ENCODE measurements at regions of chr16 and their contacts with region 1.

Region 1: GRCh38 chr16:89201439-89202377 is 1.4 kb upstream of the SLC22A31 start:
- DNase-seq: no peak
- H3K4me3 ChIP-seq: peak overlapping the region; percentile 45 to 54
- H3K27ac ChIP-seq: no peak overlapping the region
- H3K4me1 ChIP-seq: peaks cover 2 to 3% of the 10 kb centered on the region in 2 donors
- H3K27me3 ChIP-seq: peaks cover 11% of the 10 kb centered on the region
- CTCF ChIP-seq: no peak

Region 2: DNA sequence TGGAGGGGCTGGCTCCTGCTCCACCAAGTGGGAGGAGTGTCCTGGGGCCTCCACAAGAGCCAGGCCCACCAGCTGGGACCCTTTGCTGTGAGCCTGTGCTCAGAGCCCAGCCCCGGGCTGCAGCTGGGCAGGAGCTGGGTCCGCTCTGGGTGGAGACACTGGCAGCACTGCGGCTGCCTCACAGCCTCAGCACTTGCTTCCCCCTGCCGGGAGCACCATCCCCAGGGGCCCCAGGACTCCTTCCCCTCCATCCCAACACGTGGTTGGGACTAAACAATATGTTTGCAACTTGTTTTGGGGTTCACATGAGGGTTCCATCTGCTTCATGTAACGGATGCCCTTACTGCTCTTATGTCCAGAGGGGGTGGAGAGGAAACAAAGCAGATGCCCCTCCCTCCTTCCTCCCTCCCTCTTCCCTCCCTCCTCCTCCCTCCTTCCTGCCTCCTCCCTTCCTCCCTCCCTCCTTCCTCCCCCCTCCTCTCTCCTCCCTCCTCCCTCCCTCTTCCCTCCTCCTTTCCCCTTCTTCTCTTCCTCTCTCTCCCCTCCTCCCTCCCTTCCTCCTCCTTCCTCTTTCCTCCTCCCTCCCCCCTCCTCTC is 208.4 kb before region 1 on chr16:
- intact Hi-C with region 1: no loop called
- DNase-seq: no peak
- H3K4me3 ChIP-seq: no peak overlapping the region
- H3K27ac ChIP-seq: no peak overlapping the region
- H3K4me1 ChIP-seq: no peaks in the 10 kb centered on the region
- H3K27me3 ChIP-seq: peaks cover 3% of the 10 kb centered on the region
- CTCF ChIP-seq: no peak

Region 3: DNA sequence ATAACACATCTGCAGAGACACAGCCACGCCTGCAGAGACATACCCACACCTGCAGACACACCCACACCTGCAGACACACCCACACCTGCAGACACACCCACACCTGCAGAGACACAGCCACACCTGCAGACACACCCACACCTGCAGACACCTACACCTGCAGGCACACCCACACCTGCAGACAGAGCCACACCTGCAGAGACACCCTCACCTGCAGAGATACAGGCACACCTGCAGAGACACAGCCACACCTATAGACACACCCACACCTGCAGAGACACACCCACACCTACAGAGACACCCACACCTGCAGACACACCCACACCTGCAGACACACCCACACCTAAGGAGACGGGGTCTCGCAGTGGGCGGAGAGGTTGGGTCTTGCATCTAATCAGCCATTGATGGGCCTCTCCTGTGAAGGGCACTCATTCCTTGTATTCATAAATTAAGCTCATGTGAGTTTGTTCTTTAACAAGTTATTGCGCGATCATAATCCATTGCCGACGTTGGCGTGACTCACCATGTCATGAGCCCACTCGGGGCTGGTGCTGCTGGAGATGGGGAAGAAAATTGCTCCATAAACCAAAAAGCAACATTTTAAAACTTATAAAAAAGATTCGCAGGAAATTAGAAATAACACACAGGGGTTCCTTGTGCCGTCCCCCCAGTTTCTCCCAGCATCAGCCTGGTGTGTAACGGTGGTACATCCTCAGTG is 59.1 kb before region 1 on chr16:
- intact Hi-C with region 1: loop called (anchors 10 kb)
- DNase-seq: no peak
- H3K4me3 ChIP-seq: no peak overlapping the region
- H3K27ac ChIP-seq: no peak overlapping the region
- H3K4me1 ChIP-seq: no peaks in the 10 kb centered on the region
- H3K27me3 ChIP-seq: no peaks in the 10 kb centered on the region
- CTCF ChIP-seq: no peak

Region 4: DNA sequence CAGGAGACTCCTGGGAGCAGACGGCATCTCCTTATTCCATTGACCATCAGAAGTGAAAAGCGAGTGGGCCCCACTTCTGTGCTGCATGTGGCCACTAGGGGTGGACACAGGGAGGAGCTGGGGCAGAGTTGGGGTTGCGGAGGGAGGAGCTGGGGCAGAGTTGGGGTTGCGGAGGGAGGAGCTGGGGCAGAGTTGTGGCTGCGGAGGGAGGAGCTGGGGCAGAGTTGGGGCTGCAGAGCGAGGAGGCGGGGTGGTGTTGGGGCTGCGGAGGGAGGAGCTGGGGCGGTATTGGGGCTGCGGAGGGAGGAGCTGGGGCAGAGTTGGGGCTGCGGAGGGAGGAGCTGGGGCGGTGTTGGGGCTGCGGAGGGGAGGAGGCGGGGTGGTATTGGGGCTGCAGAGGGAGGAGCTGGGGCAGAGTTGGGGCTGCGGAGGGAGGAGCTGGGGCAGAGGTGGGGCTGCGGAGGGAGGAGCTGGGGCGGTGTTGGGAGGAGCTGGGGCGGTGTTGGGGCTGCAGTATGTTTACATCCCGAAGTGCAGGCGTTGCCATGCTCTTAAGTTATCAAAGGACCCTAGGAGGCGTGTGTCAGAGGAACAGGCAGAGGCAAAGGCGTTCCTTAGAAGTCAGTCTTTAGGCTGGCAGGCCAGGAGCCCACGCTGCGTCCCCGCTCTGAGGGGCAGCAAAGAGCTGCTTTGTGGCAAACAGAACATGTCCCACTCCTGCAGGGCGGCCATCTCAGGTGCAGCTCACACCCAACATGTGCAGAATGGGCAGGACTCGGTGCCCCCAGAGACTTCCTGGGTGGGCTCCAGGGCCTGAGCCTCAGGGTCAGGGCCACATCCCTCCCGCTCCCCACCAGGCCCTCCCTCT is 91.8 kb after region 1 on chr16:
- intact Hi-C with region 1: no loop called
- DNase-seq: no peak
- H3K4me3 ChIP-seq: no peak overlapping the region
- H3K27ac ChIP-seq: no peak overlapping the region
- H3K4me1 ChIP-seq: no peaks in the 10 kb centered on the region
- H3K27me3 ChIP-seq: no peaks in the 10 kb centered on the region
- CTCF ChIP-seq: no peak

Measured in ascending aorta (tissue), 2 donors.